Activated B cell treated with CpG ODN at 0.5 μM for 24 hours (primary cell): ENCODE measurements at regions of chr9 and their contacts with region 1.

Region 1: DNA sequence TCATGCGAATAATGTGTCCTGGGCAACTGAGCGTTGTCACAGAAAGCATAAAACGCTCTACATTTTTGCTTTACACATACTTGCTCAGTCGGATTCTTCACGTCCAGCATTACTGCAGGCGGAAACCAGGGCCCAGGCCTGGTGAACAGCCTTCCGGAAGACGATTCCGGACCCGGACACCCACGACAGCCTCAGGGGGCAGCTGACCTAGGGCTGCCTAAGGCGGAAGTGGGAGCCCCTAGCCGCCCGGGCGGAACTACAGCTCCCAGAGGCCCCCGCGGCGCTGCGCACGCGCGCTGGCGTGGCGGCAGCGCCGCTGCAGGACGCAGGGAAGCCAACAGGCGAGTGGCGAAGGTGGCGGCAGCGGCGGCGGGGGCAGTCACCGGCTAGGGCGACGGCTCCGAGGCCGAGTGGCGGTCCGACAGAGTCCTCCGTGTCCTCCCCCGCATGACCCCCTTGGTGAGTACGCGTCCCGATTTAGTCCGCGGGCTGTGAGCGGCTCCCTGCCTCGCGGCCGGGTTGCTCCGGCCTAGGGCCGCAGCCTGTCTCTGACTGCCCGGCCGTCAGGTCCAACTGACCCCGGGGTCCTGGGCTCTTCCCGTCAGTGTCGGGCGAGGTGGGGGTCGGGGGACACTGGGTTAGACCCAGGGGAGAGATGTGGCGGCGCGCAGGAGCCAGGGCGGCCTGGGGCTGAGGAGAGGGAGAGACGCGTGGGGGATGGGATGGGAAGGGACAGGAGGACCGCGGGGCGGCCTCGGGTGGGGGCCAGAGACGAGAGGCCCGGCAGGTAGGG is at the start of gene GAPVD1:
- DNase-seq: peak; percentile 97
- ATAC-seq: peak; percentile 93
- H3K4me3 Mint-ChIP-seq: peak within 1 kb of the TSS; percentile 96
- H3K27ac Mint-ChIP-seq: peak within 1 kb of the TSS; percentile 99
- H3K4me1 Mint-ChIP-seq: peaks cover 48% of the 10 kb centered on the region
- H3K27me3 Mint-ChIP-seq: peaks cover 2% of the 10 kb centered on the region
- CTCF ChIP-seq: no peak
- total RNA-seq, gene GAPVD1: 46.6 and 53.9 TPM in 2 replicates

Region 2: DNA sequence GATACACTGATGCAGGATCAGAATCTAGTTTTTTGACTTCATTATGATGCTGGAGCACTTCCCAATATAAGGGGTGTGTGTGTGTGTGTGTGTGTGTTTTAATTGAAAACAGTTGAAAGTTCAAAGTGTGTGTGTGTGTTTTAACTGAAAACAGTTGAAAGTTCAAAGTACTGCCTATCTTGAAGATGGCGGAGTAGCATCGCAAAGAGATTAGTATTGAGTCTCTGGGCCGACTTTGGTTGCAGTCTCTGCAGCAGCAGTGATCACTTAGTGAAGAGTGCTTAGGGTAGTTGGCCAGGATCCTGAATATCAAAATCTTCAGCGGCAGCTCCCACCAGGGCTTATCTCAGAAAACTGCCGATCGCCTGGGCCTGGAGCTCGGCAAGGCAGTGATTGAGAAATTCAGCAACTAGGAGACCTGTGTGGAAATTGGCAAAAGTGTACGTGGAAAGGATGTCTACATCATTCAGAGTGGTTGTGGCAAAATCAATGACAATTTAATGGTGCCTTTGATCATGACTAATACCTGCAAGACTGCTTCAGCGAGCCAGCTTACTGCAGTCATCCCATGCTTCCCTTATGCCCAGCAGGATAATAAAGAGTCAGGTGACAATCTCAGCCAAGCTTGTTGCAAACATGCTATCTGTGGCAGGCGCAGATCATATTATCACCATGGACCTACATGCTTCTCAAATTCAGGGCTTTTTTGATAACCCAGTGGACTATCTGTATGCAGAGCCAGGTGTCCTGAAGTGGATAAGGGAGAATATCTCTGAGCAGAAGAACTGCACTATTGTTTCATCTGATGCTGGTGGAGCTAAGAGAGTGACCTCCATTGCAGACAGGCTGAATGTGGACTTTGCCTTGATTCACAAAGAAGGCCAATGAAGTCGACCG is 111.1 kb before region 1 on chr9:
- CTCF ChIA-PET with region 1: no interaction called
- POLR2A ChIA-PET with region 1: no interaction called
- intact Hi-C with region 1: no loop called
- DNase-seq: no peak
- ATAC-seq: no peak
- H3K4me3 Mint-ChIP-seq: no peak overlapping the region
- H3K27ac Mint-ChIP-seq: no peak overlapping the region
- H3K4me1 Mint-ChIP-seq: peaks cover 4% of the 10 kb centered on the region
- H3K27me3 Mint-ChIP-seq: no peaks in the 10 kb centered on the region
- CTCF ChIP-seq: no peak

Region 3: GRCh38 chr9:125161284-125161918 is 100.3 kb before region 1 on chr9:
- CTCF ChIA-PET with region 1: no interaction called
- POLR2A ChIA-PET with region 1: no interaction called
- intact Hi-C with region 1: no loop called
- DNase-seq: no peak
- ATAC-seq: no peak
- H3K4me3 Mint-ChIP-seq: no peak overlapping the region
- H3K27ac Mint-ChIP-seq: no peak overlapping the region
- H3K4me1 Mint-ChIP-seq: no peaks in the 10 kb centered on the region
- H3K27me3 Mint-ChIP-seq: no peaks in the 10 kb centered on the region
- CTCF ChIP-seq: no peak

Region 4: GRCh38 chr9:125200210-125201047 is 61.3 kb before region 1 on chr9 and contains the start of gene RABEPK:
- CTCF ChIA-PET with region 1: no interaction called
- POLR2A ChIA-PET with region 1: interaction called, 12 read pairs
- intact Hi-C with region 1: loop called (anchors 1 kb)
- DNase-seq: peak; percentile 95
- ATAC-seq: peak; percentile 98
- H3K4me3 Mint-ChIP-seq: peak within 1 kb of the TSS; percentile 94
- H3K27ac Mint-ChIP-seq: peak within 1 kb of the TSS; percentile 92
- H3K4me1 Mint-ChIP-seq: peaks cover 13% of the 10 kb centered on the region
- H3K27me3 Mint-ChIP-seq: no peaks in the 10 kb centered on the region
- CTCF ChIP-seq: no peak
- total RNA-seq, gene RABEPK: 19.1 and 19.4 TPM in 2 replicates